IMR-90 (cell line): ENCODE measurements at regions of chr9 and their contacts with region 1.

Region 1: GRCh38 chr9:112288029-112288428 is 45.4 kb downstream of the PTBP3 start:
- DNase-seq: peak; percentile 40
- ATAC-seq: peak; percentile 29; the same call in 1 of the 2 replicates
- H3K4me3 ChIP-seq: no peak overlapping the region
- H3K27ac ChIP-seq: no peak overlapping the region
- H3K4me1 ChIP-seq: peaks cover 2% of the 10 kb centered on the region
- H3K27me3 ChIP-seq: no peaks in the 10 kb centered on the region
- CTCF ChIP-seq: no peak
- POLR2A ChIP-seq: no peak
- RAD21 ChIP-seq: no peak

Region 2: DNA sequence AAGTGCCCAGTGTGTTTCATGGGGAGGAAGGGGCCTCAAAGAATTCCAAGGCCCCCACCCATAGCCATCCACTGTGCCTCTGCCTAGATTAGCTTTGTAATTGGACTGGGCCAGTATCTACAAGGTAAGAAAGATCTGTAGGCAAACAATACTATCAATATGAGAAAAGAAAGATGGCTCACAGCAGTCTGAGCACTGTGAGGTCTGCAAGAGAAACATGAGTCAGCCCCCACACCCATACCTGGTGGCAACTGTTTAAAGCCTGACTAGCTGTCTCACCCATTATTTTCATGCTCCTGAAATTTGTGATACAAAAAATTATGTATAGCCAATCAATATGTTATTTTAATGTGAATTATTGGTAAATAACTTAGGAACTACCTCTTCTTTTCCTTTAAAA is 773.1 kb before region 1 on chr9:
- CTCF ChIA-PET with region 1: no interaction called
- POLR2A ChIA-PET with region 1: no interaction called
- dilution Hi-C with region 1: no loop called
- in situ Hi-C with region 1: no loop called
- intact Hi-C with region 1: loop called (anchors 5 kb)
- DNase-seq: no peak
- ATAC-seq: no peak
- H3K4me3 ChIP-seq: no peak overlapping the region
- H3K27ac ChIP-seq: no peak overlapping the region
- H3K4me1 ChIP-seq: no peaks in the 10 kb centered on the region
- H3K27me3 ChIP-seq: no peaks in the 10 kb centered on the region; the same call in none of the 2 replicates
- CTCF ChIP-seq: no peak
- POLR2A ChIP-seq: no peak
- RAD21 ChIP-seq: no peak